ENCODE measurements at regions of chr20 and their contacts with region 1.

Region 1: GRCh38 chr20:58650776-58651558 is at the start of gene STX16:
- DNase-seq: peak; percentile 93
- ATAC-seq: peak; percentile 81
- H3K4me3 Mint-ChIP-seq: peak within 1 kb of the TSS; percentile 99
- H3K27ac Mint-ChIP-seq: peak within 1 kb of the TSS; percentile 98
- H3K4me1 Mint-ChIP-seq: peaks cover 19% of the 10 kb centered on the region
- H3K27me3 Mint-ChIP-seq: no peaks in the 10 kb centered on the region
- total RNA-seq, gene STX16: 120 to 165 TPM

Region 2: GRCh38 chr20:58236612-58237330 is 414.2 kb before region 1 on chr20:
- CTCF ChIA-PET with region 1: interaction called, 11 read pairs
- DNase-seq: peak; percentile 86
- ATAC-seq: peak; percentile 94
- H3K4me3 Mint-ChIP-seq: peak overlapping the region; percentile 76
- H3K27ac Mint-ChIP-seq: peak overlapping the region; percentile 80
- H3K4me1 Mint-ChIP-seq: peaks cover 23% of the 10 kb centered on the region
- H3K27me3 Mint-ChIP-seq: peaks cover 2% of the 10 kb centered on the region

Region 3: DNA sequence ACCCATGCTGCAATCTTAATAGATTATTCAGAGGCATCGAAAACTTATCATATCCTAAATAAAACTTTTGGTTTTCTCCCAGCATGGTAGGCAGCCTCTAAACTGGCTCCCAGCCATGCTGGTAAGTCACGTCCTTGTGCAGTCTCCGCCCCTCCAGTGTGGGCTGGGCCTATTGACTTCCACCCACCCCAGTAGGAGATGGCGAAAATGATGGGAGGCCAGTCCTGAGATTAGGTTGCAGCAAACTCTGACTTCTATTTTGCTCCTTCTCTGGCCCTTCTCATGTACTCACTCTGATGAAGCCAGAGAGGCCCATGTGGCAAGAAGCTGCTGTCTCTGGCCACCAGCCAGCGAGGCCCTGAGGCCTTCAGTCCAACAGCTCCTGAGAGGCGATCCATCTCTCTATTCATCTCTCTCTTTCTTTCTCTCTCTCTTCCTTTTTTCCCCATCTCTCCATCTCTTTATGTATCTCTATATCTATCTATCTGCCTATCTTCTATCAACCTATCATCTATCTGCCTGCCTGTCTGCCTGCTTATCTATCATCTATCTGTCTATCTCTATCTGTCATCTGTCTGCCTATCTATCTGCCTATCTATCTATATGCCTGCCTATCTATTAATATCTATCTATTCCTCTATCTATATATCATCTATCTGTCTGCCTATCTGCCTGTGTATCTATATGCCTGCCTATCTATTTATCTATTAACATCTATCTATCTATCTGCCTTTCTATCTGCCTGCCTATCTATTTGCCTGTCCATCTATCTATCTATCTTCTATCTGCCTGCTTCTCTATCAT is 52.6 kb before region 1 on chr20:
- CTCF ChIA-PET with region 1: no interaction called
- DNase-seq: no peak
- ATAC-seq: no peak
- H3K4me3 Mint-ChIP-seq: no peak overlapping the region
- H3K27ac Mint-ChIP-seq: no peak overlapping the region
- H3K4me1 Mint-ChIP-seq: no peaks in the 10 kb centered on the region
- H3K27me3 Mint-ChIP-seq: peaks cover 2% of the 10 kb centered on the region

Region 4: DNA sequence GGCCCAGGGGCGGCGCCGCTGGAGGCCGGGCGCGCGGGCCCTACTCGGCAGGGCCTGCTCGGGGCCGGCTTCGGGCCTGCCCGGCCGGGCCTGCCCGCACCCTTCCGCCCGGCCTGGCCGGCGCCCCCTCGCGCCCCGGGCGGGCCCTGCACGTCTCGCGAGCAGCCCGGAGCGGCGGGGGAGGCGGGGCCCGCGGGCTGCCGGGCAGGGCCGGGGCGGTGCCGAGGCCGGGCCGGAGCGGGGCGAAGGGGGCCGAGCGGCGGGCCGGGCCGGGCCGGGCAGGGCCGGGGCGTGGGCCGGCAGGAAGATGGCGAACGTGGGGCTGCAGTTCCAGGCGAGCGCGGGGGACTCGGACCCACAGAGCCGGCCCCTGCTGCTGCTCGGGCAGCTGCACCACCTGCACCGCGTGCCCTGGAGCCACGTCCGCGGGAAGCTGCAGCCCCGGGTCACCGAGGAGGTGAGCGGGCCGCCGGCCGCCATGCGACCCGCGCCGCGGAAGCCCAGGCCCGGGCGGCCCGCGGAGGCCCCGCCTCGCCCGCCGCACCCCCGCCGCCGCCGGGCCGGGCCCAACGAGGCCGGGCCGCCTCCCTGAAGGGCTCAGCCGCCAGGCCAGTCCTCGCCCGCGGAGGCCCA is 41.7 kb after region 1 on chr20 and contains the start of gene NPEPL1:
- CTCF ChIA-PET with region 1: interaction called, 41 read pairs
- DNase-seq: peak; percentile 67
- ATAC-seq: peak; percentile 97
- H3K4me3 Mint-ChIP-seq: peak within 1 kb of the TSS; percentile 53
- H3K27ac Mint-ChIP-seq: peak within 1 kb of the TSS; percentile 48
- H3K4me1 Mint-ChIP-seq: peaks cover 12% of the 10 kb centered on the region
- H3K27me3 Mint-ChIP-seq: no peaks in the 10 kb centered on the region
- total RNA-seq, gene NPEPL1: 19.3 to 30.4 TPM

Region 5: DNA sequence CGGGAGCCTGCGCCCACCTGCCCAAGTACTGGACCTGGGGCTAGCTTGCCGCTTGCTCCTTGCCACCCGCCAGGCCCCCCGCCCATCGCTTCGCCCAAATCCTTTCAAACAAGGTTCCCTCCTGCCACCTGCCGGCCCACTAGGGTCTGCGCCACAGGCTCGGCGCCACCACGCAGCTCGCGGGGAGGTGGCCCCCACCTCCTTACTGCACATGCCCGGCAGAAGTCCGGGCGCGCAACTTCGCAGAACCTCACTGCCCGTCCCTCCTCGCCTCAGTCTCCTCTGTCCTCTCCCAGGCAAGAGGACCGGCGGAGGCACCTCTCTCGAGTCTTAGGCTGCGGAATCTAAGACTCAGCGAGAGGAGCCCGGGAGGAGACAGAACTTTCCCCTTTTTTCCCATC is 188.5 kb after region 1 on chr20:
- CTCF ChIA-PET with region 1: interaction called, 32 read pairs
- DNase-seq: no peak
- ATAC-seq: peak; percentile 53
- H3K4me3 Mint-ChIP-seq: no peak overlapping the region
- H3K27ac Mint-ChIP-seq: no peak overlapping the region
- H3K4me1 Mint-ChIP-seq: peaks cover 40% of the 10 kb centered on the region
- H3K27me3 Mint-ChIP-seq: peaks cover 96% of the 10 kb centered on the region

Region 6: GRCh38 chr20:58850693-58851174 is 199.8 kb after region 1 on chr20 and contains the start of gene GNAS-AS1:
- CTCF ChIA-PET with region 1: interaction called, 30 read pairs
- DNase-seq: peak; percentile 88
- ATAC-seq: peak; percentile 93
- H3K4me3 Mint-ChIP-seq: peak within 1 kb of the TSS; percentile 80
- H3K27ac Mint-ChIP-seq: no peak within 1 kb of the TSS
- H3K4me1 Mint-ChIP-seq: peaks cover 24% of the 10 kb centered on the region
- H3K27me3 Mint-ChIP-seq: peaks cover 79% of the 10 kb centered on the region
- total RNA-seq, gene GNAS-AS1: 0.89 to 1.8 TPM